PC-3 (cell line): ENCODE measurements at regions of chr19 and their contacts with region 1.

Region 1: DNA sequence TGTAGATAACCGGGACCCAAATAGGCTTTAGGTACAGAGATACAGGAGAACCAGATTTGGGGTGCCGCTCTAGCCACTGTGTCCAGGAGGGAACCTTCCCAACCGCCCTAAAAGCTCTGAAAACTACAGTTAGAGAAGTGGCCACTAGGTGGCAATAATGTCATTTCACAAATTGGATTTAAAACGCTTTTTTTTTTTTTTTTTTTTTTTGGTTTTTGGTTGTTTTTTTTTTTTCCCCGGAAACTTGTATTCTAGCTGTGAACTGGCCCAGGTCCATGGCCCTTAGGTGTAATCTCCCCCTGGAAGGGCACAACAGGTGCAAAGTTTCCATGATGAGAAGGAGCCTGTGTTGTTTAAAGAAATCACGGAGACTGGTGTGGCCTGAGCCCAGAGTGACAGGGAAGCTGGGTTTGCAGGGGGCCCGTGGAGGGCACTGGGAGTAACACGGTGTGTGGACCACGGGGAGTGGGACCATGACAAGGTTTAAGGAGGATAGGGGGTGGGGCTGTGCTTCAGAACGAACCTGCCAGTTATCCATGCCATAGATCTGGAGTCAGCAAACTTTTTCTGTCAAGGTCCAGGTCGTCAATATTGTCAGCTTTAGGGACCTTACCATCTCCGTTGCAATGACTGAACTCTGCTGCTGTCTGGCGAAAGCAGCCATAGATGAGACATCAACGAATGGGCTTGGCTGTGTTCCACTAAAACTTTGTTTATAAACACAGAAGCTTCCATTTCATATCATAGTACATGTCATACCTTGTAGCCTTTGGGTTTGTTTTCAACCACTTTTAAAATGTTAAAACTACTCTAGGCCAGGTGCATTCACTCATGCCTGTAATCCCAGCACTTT is 10.1 kb downstream of the OR1I1 start:
- DNase-seq: peak; percentile 89
- ATAC-seq: peak; percentile 57
- H3K4me3 ChIP-seq: peak overlapping the region; percentile 42
- H3K27ac ChIP-seq: no peak overlapping the region
- H3K4me1 ChIP-seq: peaks cover 6% of the 10 kb centered on the region
- H3K27me3 ChIP-seq: 0 out of 2 replicates have a peak, but pooled peaks cover 4% of the 10 kb centered on the region
- CTCF ChIP-seq: peak; percentile 80

Region 2: GRCh38 chr19:14804765-14805164 is 287.4 kb before region 1 on chr19:
- CTCF ChIA-PET with region 1: interaction called, 13 read pairs
- POLR2A ChIA-PET with region 1: no interaction called
- intact Hi-C with region 1: no loop called
- DNase-seq: no peak
- ATAC-seq: no peak
- H3K4me3 ChIP-seq: no peak overlapping the region
- H3K27ac ChIP-seq: no peak overlapping the region
- H3K4me1 ChIP-seq: no peaks in the 10 kb centered on the region
- H3K27me3 ChIP-seq: peaks cover 34% of the 10 kb centered on the region
- CTCF ChIP-seq: no peak

Region 3: GRCh38 chr19:15015946-15016542 is 76.1 kb before region 1 on chr19:
- CTCF ChIA-PET with region 1: no interaction called
- POLR2A ChIA-PET with region 1: no interaction called
- intact Hi-C with region 1: no loop called
- DNase-seq: peak; percentile 42
- ATAC-seq: no peak
- H3K4me3 ChIP-seq: no peak overlapping the region
- H3K27ac ChIP-seq: no peak overlapping the region
- H3K4me1 ChIP-seq: no peaks in the 10 kb centered on the region
- H3K27me3 ChIP-seq: no peaks in the 10 kb centered on the region
- CTCF ChIP-seq: no peak

Region 4: GRCh38 chr19:15072930-15073647 is 19.0 kb before region 1 on chr19:
- CTCF ChIA-PET with region 1: interaction called, 16 read pairs
- POLR2A ChIA-PET with region 1: no interaction called
- intact Hi-C with region 1: no loop called
- DNase-seq: peak; percentile 98
- ATAC-seq: peak; percentile 89
- H3K4me3 ChIP-seq: peak overlapping the region; percentile 46; the same call in 1 of the 2 replicates
- H3K27ac ChIP-seq: peak overlapping the region; percentile 84
- H3K4me1 ChIP-seq: peaks cover 38% of the 10 kb centered on the region
- H3K27me3 ChIP-seq: no peaks in the 10 kb centered on the region
- CTCF ChIP-seq: peak; percentile 55

Region 5: GRCh38 chr19:15154002-15154612 is 62.0 kb after region 1 on chr19:
- CTCF ChIA-PET with region 1: interaction called, 18 read pairs
- POLR2A ChIA-PET with region 1: no interaction called
- intact Hi-C with region 1: loop called (anchors 1 kb)
- DNase-seq: peak; percentile 74
- ATAC-seq: peak; percentile 52; the same call in 1 of the 2 replicates
- H3K4me3 ChIP-seq: no peak overlapping the region
- H3K27ac ChIP-seq: no peak overlapping the region
- H3K4me1 ChIP-seq: no peaks in the 10 kb centered on the region
- H3K27me3 ChIP-seq: no peaks in the 10 kb centered on the region
- CTCF ChIP-seq: peak; percentile 79

Region 6: DNA sequence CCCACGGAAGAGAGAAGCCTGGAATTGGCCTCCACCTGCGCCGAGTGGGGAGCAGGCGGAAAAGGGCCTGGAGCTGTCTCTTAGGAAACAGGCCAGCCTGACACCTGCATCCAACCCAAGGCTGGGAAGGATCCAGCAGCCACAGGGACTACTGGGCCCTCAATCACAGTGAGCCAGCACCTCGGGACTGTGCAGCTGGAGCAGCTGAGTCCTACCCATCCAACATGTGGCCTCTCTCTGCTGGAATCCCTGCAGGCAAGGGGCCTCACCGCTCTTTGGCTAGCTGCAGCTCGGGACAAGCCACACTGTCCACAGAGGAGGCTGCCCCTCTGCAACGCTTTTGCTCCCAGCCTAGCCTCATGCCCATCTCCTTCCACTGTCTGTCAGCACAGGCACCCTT is 148.4 kb after region 1 on chr19:
- CTCF ChIA-PET with region 1: interaction called, 18 read pairs
- POLR2A ChIA-PET with region 1: no interaction called
- intact Hi-C with region 1: no loop called
- DNase-seq: no peak
- ATAC-seq: no peak
- H3K4me3 ChIP-seq: no peak overlapping the region
- H3K27ac ChIP-seq: no peak overlapping the region
- H3K4me1 ChIP-seq: no peaks in the 10 kb centered on the region
- H3K27me3 ChIP-seq: no peaks in the 10 kb centered on the region
- CTCF ChIP-seq: no peak

Region 7: GRCh38 chr19:15396436-15396835 is 304.3 kb after region 1 on chr19:
- CTCF ChIA-PET with region 1: interaction called, 17 read pairs
- POLR2A ChIA-PET with region 1: no interaction called
- intact Hi-C with region 1: no loop called
- DNase-seq: no peak
- ATAC-seq: no peak
- H3K4me3 ChIP-seq: no peak overlapping the region
- H3K27ac ChIP-seq: no peak overlapping the region
- H3K4me1 ChIP-seq: no peaks in the 10 kb centered on the region
- H3K27me3 ChIP-seq: no peaks in the 10 kb centered on the region
- CTCF ChIP-seq: no peak